Right ventricle myocardium superior (tissue), 1 donor: ENCODE measurements at regions of chr19 and their contacts with region 1.

Region 1: DNA sequence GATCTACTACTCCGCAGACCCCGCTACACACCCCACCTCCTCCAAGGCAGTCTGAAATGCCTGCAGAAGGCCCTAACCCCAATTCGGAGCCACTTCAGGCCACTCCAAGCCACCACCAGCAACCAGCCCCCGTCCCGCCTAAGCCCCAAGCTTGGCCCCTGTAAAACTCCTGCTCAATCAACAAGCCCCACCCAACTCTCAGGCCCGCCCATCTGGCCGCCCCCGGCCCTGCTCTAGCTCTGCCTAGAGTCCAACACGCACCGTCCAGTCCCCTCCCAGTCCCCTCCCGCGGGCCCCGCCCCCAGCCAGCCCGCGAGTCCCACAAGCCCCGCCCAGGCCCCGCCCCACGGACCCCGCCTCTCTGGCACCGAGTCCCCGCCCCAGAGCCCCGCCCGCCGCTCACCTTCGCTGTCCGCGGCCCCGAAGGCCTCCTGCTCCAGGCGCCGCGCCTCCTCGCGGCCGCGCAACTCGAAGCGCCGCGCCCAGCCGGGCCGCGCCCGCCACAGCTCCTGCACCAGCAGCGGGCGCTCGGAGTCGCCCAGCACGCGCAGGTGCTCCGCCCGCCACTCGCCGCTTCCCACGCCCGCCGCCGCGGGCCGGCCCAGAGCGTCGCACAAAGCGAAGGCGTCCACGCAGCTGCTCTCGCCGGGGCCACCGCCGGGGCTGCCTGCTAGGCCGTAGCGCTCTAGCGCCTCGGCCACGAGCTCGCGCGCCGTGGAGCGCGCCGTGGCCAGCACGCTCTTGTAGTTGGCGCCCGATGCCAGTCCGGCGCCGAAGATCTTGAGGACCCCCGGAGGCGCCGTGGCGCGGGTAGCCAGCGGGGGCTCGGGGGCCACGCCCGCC is 1.6 kb downstream of the RASIP1 start:
- DNase-seq: peak; percentile 94
- ATAC-seq: peak; percentile 91

Region 2: GRCh38 chr19:48646001-48646721 is 92.6 kb before region 1 on chr19 and contains the start of gene CA11:
- intact Hi-C with region 1: loop called (anchors 10 kb)
- DNase-seq: peak; percentile 90
- ATAC-seq: peak; percentile 95
- total RNA-seq, gene CA11: 7.5 TPM